Panc1 (cell line): ENCODE measurements at regions of chr12 and their contacts with region 1.

Region 1: DNA sequence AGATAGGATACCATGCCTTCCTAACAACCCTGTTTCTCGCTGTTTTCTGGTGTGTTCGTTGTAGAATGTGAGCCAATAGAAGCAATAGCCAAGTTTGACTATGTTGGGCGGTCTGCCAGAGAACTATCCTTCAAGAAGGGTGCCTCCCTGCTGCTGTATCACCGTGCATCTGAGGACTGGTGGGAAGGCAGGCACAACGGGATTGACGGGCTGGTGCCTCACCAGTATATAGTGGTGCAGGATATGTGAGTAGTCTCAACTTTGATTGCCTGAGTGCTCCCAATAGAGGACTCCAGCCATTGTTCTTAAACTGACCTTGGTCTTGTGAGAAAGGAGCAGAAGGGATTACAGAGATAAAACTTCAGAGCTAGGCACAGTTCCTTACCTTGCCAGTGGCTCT is 96.2 kb downstream of the KICS2 start:
- DNase-seq: no peak
- ATAC-seq: no peak
- H3K4me3 ChIP-seq: no peak overlapping the region
- H3K27ac ChIP-seq: no peak overlapping the region
- H3K4me1 ChIP-seq: no peaks in the 10 kb centered on the region
- H3K27me3 ChIP-seq: no peaks in the 10 kb centered on the region
- CTCF ChIP-seq: no peak

Region 2: GRCh38 chr12:64139021-64139420 is 13.1 kb after region 1 on chr12:
- CTCF ChIA-PET with region 1: no interaction called
- POLR2A ChIA-PET with region 1: interaction called, 17 read pairs
- in situ Hi-C with region 1: no loop called
- intact Hi-C with region 1: no loop called
- DNase-seq: no peak
- ATAC-seq: no peak
- H3K4me3 ChIP-seq: no peak overlapping the region
- H3K27ac ChIP-seq: no peak overlapping the region
- H3K4me1 ChIP-seq: no peaks in the 10 kb centered on the region
- H3K27me3 ChIP-seq: no peaks in the 10 kb centered on the region
- CTCF ChIP-seq: no peak